ENCODE measurements at regions of chr9 and their contacts with region 1.

Region 1: DNA sequence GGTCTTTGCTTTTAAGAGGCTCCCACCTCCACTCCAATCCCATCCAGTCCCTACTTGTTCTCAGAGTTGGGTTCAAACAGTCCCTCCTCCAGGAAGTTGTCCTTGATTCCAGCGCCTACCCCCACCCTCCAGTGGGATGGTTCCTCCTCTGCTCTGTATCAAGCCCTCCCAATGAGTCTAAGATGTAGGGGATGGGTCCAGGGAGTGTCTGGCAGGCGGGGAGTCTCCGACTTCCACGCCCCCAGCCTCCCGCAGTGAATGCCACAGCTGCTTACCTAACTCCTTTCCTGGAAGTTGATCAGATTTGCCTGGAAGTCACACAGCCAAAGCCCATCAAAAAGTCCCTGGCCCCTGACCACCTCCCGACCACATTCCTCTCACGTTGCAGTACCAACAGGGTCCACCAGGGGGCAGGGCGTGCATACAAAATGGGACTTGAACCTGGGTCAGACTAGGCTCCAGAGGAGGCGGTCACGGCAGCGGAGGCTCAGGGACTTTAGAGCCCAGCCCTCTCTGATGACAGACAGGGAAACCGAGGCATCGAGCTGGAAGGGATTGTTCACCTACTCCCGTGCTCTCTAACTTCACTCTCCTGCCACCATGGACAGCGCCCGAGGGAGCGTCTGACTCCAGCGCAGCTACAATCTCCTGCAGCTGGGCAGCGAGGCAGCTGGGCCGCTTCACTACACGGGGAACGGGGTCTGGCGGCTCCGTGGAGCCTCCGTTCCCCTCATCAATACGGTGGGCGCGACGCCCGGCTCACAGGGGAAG is 25.0 kb upstream of the TDRD7 start:
- DNase-seq: peak; percentile 92
- ATAC-seq: peak; percentile 74
- H3K4me3 Mint-ChIP-seq: peak overlapping the region; percentile 41
- H3K27ac Mint-ChIP-seq: no peak overlapping the region
- H3K4me1 Mint-ChIP-seq: peaks cover 24% of the 10 kb centered on the region
- H3K27me3 Mint-ChIP-seq: peaks cover 11% of the 10 kb centered on the region
- CTCF ChIP-seq: peak; percentile 100

Region 2: GRCh38 chr9:97096793-97097192 is 290.1 kb before region 1 on chr9:
- CTCF ChIA-PET with region 1: no interaction called
- POLR2A ChIA-PET with region 1: no interaction called
- DNase-seq: no peak
- ATAC-seq: no peak
- H3K4me3 Mint-ChIP-seq: no peak overlapping the region
- H3K27ac Mint-ChIP-seq: no peak overlapping the region
- H3K4me1 Mint-ChIP-seq: no peaks in the 10 kb centered on the region
- H3K27me3 Mint-ChIP-seq: no peaks in the 10 kb centered on the region
- CTCF ChIP-seq: no peak

Region 3: GRCh38 chr9:97357056-97357455 is 29.9 kb before region 1 on chr9:
- CTCF ChIA-PET with region 1: no interaction called
- POLR2A ChIA-PET with region 1: no interaction called
- DNase-seq: no peak
- ATAC-seq: no peak
- H3K4me3 Mint-ChIP-seq: no peak overlapping the region
- H3K27ac Mint-ChIP-seq: no peak overlapping the region
- H3K4me1 Mint-ChIP-seq: no peaks in the 10 kb centered on the region
- H3K27me3 Mint-ChIP-seq: no peaks in the 10 kb centered on the region
- CTCF ChIP-seq: no peak

Region 4: DNA sequence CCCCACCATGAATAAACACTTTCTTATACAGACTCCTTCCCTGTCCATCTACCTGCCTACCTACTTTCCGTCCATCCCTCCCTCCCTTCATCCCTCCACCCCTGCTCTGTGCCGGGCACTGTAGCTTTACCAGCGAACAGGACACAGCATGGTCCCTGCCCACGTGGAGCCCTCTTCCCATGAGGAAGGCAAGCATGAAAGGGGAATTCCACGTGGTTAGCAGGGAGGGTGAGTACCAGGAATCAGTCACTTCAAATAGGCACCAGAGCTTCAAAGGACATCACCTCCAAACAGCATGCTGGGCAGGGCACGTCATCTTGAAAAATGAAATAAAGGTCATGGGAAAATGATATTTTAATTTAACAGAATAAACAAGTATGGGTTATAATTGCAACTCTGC is 10.0 kb before region 1 on chr9:
- CTCF ChIA-PET with region 1: interaction called, 16 read pairs
- POLR2A ChIA-PET with region 1: no interaction called
- DNase-seq: no peak
- ATAC-seq: no peak
- H3K4me3 Mint-ChIP-seq: no peak overlapping the region
- H3K27ac Mint-ChIP-seq: no peak overlapping the region
- H3K4me1 Mint-ChIP-seq: no peaks in the 10 kb centered on the region
- H3K27me3 Mint-ChIP-seq: no peaks in the 10 kb centered on the region
- CTCF ChIP-seq: no peak

Region 5: GRCh38 chr9:97398999-97399758 is 12.3 kb after region 1 on chr9:
- CTCF ChIA-PET with region 1: interaction called, 14 read pairs
- POLR2A ChIA-PET with region 1: no interaction called
- DNase-seq: peak; percentile 83
- ATAC-seq: peak; percentile 90
- H3K4me3 Mint-ChIP-seq: no peak overlapping the region
- H3K27ac Mint-ChIP-seq: no peak overlapping the region
- H3K4me1 Mint-ChIP-seq: peaks cover 4% of the 10 kb centered on the region
- H3K27me3 Mint-ChIP-seq: peaks cover 8% of the 10 kb centered on the region
- CTCF ChIP-seq: peak; percentile 99

Region 6: DNA sequence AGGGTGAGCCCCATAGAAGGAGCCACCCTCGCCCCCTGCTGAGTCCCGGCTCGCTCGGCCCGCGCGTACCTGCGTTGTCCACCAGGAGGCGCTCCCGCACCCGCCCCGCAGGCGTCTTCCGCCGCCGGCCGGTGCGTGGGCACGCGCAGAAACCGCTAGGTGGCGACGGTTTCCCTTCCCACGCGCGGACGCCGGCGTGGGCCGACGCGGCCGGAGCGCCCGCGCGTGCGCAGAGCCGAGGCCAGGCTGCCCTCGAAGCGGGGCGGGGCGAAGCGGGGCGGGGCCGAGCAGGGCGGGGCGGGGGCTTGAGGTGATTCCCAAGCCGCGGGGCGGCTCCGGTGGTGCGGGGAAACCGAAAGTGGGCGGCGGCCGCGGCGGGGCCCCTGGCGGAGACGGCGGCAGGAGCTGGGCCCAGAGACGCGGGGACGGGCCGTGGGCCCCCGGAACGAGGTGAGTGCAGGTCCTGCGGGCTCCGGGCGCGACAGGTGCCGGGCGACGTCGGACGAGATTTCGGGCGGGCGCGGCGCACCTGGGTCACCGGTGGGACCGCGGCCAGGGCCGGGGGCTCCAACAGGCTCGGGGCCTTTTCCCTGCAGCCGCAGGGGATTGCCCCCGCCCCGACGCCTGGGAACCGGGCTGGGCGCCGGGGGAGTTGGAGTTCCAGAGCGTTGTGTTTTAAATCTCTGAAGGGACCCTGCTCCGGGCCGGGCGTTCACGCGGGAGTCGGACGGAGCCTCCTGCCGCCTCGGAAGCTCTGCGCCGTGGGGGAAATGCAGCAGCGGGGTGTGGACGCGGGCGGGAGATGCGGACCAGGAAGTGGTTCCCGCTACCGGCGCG is 25.1 kb after region 1 on chr9 and contains the start of gene TDRD7:
- CTCF ChIA-PET with region 1: interaction called, 17 read pairs
- POLR2A ChIA-PET with region 1: no interaction called
- DNase-seq: peak; percentile 72
- ATAC-seq: peak; percentile 75
- H3K4me3 Mint-ChIP-seq: peak within 1 kb of the TSS; percentile 86
- H3K27ac Mint-ChIP-seq: no peak within 1 kb of the TSS
- H3K4me1 Mint-ChIP-seq: peaks cover 14% of the 10 kb centered on the region
- H3K27me3 Mint-ChIP-seq: peaks cover 60% of the 10 kb centered on the region
- CTCF ChIP-seq: peak; percentile 98
- total RNA-seq, gene TDRD7: 2.3 to 2.8 TPM (median 2.5 TPM) in 3 replicates